Heart right ventricle (tissue), 16 donors: ENCODE measurements at regions of chr16 and their contacts with region 1.

Region 1: GRCh38 chr16:18983565-18984424 is at the start of gene TMC7:
- DNase-seq: peak; percentile 83 to 87
- ATAC-seq: peak; percentile 95 to 99 (median 98)
- H3K4me3 ChIP-seq: peak within 1 kb of the TSS; percentile 29 to 80 (median 64)
- H3K27ac ChIP-seq: peak within 1 kb of the TSS; percentile 17 to 85 (median 70)
- H3K4me1 ChIP-seq: peaks cover 0 to 21% (median 8%) of the 10 kb centered on the region in 9 donors
- H3K27me3 ChIP-seq: peaks cover 0 to 28% (median 0%) of the 10 kb centered on the region in 7 donors
- CTCF ChIP-seq: peak; percentile 64 to 93 (median 74)
- total RNA-seq, gene TMC7: 0.76 to 1.7 (median 1.2) TPM

Region 2: DNA sequence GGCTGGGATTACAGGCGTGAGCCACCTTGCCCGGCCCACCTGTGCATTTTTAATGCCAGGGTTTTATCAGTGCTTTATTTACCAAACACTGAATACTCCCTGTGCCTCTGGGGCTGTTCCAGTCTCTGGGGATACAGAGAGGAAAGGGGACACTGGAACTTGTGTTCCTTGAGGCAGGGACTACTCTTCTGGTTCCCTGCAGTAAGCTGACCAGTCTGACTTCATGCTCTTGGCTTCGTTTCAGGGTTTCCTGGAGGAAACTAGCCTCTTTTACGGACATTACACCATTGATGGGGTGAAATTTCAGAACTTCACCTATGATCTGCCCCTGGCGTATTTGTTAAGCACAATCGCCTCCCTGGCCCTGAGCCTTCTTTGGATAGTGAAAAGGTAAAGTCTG is 46.2 kb after region 1 on chr16:
- intact Hi-C with region 1: loop called in 1 of 10 experiments (anchors 5 kb)
- DNase-seq: peak in 1 of 2 donors; percentile 33
- ATAC-seq: peak; percentile 50 to 86 (median 80)
- H3K4me3 ChIP-seq: no peak overlapping the region
- H3K27ac ChIP-seq: peak overlapping the region in 6 of 10 donors; percentile 14 to 64 (median 28)
- H3K4me1 ChIP-seq: peaks cover 0 to 18% (median 0%) of the 10 kb centered on the region in 9 donors
- H3K27me3 ChIP-seq: no peaks in the 10 kb centered on the region
- CTCF ChIP-seq: no peak

Region 3: DNA sequence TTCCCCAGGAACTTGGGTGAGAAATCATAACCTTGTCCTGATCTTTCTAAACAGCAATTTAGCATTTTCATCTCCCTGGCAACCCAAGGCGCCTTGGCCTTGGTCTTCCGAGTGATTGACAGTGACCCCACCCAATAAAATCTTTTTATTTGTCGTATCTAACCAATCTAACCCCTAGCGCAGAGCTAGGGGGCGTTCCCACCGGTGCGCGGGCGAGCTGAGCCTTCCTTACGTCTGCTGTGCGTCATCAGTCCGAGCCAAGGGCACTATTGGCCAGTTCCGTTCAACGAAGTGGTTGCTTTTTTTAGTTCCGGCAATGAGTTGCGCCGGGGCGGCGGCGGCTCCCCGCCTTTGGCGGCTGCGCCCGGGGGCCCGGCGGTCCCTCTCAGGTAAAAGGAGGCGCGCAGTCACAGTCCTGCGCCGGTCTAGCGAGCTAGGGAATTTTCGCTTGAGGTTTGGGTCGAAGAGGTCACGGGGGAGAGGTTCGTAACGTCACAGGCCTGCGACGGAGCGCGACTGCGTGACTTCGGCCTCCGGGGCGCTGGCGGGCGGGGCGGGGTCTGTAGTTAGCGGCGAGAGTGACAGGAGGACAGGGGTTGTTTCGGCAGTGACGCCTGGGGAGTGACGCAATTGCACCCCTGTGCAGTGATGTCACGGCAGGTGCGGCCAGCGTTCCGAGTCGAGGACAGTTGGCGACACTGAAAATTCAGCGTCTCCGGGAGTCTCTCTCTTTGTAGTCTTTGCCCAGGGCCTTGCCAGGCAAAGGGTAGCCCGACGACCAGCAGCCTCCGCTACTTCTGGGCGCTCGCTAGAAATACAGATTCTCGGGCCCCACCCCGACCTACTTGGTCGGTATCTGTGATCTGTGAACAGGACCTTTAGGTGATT is 83.8 kb after region 1 on chr16 and contains the start of gene COQ7:
- intact Hi-C with region 1: loop called in 9 of 10 experiments (anchors 1 to 10 kb)
- DNase-seq: peak; percentile 97 to 99
- ATAC-seq: peak; percentile 96 to 98 (median 98)
- H3K4me3 ChIP-seq: peak within 1 kb of the TSS; percentile 60 to 93 (median 74)
- H3K27ac ChIP-seq: peak within 1 kb of the TSS; percentile 97 to 100 (median 99)
- H3K4me1 ChIP-seq: peaks cover 0 to 32% (median 18%) of the 10 kb centered on the region in 9 donors
- H3K27me3 ChIP-seq: no peaks in the 10 kb centered on the region
- CTCF ChIP-seq: peak in 1 of 9 donors; percentile 18
- total RNA-seq, gene COQ7: 37.0 to 52.9 (median 43.6) TPM

Region 4: GRCh38 chr16:19804538-19805323 is 820.9 kb after region 1 on chr16:
- intact Hi-C with region 1: no loop called
- DNase-seq: peak; percentile 66 to 90
- ATAC-seq: peak; percentile 79 to 89 (median 87)
- H3K4me3 ChIP-seq: no peak overlapping the region
- H3K27ac ChIP-seq: peak overlapping the region; percentile 51 to 85 (median 72)
- H3K4me1 ChIP-seq: peaks cover 6 to 58% (median 37%) of the 10 kb centered on the region in 9 donors
- H3K27me3 ChIP-seq: no peaks in the 10 kb centered on the region
- CTCF ChIP-seq: no peak